ENCODE measurements at regions of chr22 and their contacts with region 1.

Region 1: DNA sequence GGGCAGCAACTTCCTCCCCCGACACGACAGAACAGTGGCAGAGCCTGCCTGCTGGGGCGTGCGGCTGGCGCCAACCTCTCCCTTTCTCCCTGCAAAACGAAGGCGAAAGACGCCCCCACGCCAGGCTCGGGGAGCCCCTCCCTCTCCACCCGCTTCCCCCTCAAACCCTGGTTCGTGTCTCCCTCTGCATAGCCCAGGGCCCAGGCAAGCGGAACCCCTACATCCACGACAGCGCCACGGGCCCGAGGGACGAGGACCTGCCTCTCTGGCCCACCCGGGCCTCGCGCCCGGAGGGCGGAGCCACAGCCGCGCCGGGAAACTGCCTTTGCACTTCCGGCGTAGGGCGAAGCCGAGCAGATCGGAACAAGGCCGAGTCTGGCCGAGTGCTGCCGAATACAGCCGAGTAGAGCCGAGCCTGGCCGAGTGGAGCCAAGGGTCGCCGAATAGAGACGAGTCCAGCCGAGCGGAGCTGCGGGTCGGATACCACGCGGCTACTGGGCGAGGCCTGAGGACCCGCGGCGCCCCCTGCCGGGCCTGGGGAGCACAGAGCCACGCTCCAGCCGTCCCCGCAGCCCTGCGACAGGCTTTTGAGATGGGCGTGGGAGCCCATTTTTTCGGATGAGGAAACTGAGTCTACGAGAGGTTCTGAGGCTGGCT is 11.2 kb upstream of the C1QTNF6 start:
- DNase-seq: peak; percentile 99
- ATAC-seq: peak; percentile 96
- H3K4me3 ChIP-seq: peak overlapping the region; percentile 59 to 89 (median 80)
- H3K4me3 Mint-ChIP-seq: peak overlapping the region; percentile 93
- H3K27ac ChIP-seq: peak overlapping the region; percentile 85 to 90
- H3K27ac Mint-ChIP-seq: peak overlapping the region; percentile 97
- H3K4me1 ChIP-seq: peaks cover 21 to 28% of the 10 kb centered on the region in 2 donors
- H3K4me1 Mint-ChIP-seq: peaks cover 26% of the 10 kb centered on the region
- H3K27me3 ChIP-seq: no peaks in the 10 kb centered on the region
- H3K27me3 Mint-ChIP-seq: no peaks in the 10 kb centered on the region
- CTCF ChIP-seq: peak; percentile 97

Region 2: GRCh38 chr22:37121887-37122591 is 77.2 kb before region 1 on chr22:
- CTCF ChIA-PET with region 1: interaction called, 5 read pairs
- POLR2A ChIA-PET with region 1: no interaction called
- intact Hi-C with region 1: loop called (anchors 1 kb)
- DNase-seq: peak; percentile 88
- ATAC-seq: peak; percentile 92
- H3K4me3 ChIP-seq: peak overlapping the region in 1 of 5 experiments; percentile 33
- H3K4me3 Mint-ChIP-seq: peak overlapping the region; percentile 86
- H3K27ac ChIP-seq: peak overlapping the region; percentile 39 to 69
- H3K27ac Mint-ChIP-seq: peak overlapping the region; percentile 98
- H3K4me1 ChIP-seq: peaks cover 14 to 24% of the 10 kb centered on the region in 2 donors
- H3K4me1 Mint-ChIP-seq: peaks cover 29% of the 10 kb centered on the region
- H3K27me3 ChIP-seq: no peaks in the 10 kb centered on the region
- H3K27me3 Mint-ChIP-seq: no peaks in the 10 kb centered on the region
- CTCF ChIP-seq: peak; percentile 19

Region 3: DNA sequence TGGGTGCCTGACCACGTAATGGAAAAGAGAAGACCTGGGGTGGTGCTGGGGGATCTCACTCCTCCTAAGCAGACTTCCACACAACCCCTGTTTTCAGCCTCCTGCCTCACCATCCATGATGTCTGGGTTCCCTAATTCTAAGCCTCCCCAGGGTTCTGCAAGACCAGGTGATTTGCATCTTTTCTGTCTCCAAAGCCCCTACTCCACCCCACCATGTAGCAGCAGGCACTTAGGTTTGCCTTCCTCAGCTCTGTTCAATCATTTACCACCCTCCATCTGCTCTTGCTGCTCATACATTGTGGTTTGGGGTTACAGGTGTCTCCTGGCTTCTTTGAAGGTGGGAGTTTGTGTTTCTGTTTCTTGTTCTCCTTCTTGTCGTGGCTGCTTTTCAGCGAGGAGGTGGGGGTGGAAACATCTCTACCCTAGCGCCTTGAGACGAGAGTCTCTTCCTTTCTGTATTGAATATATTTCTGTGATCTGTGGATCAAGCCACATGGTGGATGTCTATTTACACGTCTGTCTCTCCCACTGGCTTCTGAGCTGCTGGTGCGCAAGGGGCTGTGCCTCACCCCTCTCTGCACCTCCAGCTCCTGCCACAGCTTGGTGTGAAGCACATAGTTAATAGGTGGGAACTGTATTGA is 19.7 kb after region 1 on chr22:
- CTCF ChIA-PET with region 1: interaction called, 74 read pairs
- POLR2A ChIA-PET with region 1: interaction called, 17 read pairs
- intact Hi-C with region 1: loop called (anchors 1 kb)
- DNase-seq: peak; percentile 93
- ATAC-seq: peak; percentile 88
- H3K4me3 ChIP-seq: peak overlapping the region in 4 of 5 experiments; percentile 11 to 29 (median 22)
- H3K4me3 Mint-ChIP-seq: peak overlapping the region; percentile 69
- H3K27ac ChIP-seq: peak overlapping the region; percentile 87 to 93
- H3K27ac Mint-ChIP-seq: peak overlapping the region; percentile 94
- H3K4me1 ChIP-seq: peaks cover 65 to 74% of the 10 kb centered on the region in 2 donors
- H3K4me1 Mint-ChIP-seq: peaks cover 68% of the 10 kb centered on the region
- H3K27me3 ChIP-seq: no peaks in the 10 kb centered on the region
- H3K27me3 Mint-ChIP-seq: no peaks in the 10 kb centered on the region
- CTCF ChIP-seq: no peak

Region 4: DNA sequence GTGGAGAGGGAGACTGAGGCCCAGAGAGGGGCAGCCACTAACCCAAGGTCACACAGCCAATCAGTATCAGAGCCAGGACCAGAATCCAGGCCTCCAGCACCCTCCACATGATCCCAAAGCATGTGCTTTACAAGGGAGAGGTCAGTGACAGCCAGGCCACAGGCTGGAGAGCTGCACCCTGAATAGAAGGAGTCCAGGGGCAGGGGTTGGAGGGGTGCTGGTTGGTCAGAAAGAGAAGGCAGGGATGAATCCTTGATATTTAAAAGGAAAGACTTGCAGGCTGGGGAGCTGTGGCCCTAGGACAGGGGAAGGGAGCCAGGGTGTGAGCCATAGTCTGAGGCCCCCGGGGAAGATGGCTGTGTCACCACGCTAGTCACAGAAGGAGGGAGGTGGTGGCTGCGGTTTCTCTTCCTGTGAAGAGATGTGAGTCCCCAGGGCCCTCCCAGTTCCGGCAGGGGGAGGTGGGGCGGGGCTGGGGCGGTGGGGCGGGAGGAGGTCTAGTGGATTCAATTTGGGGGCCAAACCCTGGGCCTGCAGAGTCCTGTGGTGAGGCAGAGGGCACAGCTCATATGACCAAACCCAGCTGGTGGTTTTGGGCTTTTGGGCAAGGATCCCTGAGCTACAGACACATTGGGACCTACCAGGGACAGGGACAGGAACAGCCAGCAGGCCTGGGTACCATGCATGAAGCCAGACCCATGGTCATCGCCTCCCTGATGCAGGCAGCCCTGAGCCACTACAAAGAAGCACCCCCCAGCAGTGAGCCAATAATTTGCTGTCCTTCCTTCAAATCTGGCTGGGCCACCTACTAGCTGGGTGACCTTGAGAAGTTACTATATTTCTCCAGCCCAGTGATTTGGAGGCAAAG is 30.8 kb after region 1 on chr22:
- CTCF ChIA-PET with region 1: interaction called, 43 read pairs
- POLR2A ChIA-PET with region 1: interaction called, 16 read pairs
- intact Hi-C with region 1: no loop called
- DNase-seq: peak; percentile 85
- ATAC-seq: peak; percentile 87
- H3K4me3 ChIP-seq: peak overlapping the region; percentile 13 to 30 (median 18)
- H3K4me3 Mint-ChIP-seq: peak overlapping the region; percentile 86
- H3K27ac ChIP-seq: peak overlapping the region; percentile 91 to 96
- H3K27ac Mint-ChIP-seq: peak overlapping the region; percentile 100
- H3K4me1 ChIP-seq: peaks cover 85 to 95% of the 10 kb centered on the region in 2 donors
- H3K4me1 Mint-ChIP-seq: peaks cover 88% of the 10 kb centered on the region
- H3K27me3 ChIP-seq: no peaks in the 10 kb centered on the region
- H3K27me3 Mint-ChIP-seq: no peaks in the 10 kb centered on the region
- CTCF ChIP-seq: no peak

Region 5: DNA sequence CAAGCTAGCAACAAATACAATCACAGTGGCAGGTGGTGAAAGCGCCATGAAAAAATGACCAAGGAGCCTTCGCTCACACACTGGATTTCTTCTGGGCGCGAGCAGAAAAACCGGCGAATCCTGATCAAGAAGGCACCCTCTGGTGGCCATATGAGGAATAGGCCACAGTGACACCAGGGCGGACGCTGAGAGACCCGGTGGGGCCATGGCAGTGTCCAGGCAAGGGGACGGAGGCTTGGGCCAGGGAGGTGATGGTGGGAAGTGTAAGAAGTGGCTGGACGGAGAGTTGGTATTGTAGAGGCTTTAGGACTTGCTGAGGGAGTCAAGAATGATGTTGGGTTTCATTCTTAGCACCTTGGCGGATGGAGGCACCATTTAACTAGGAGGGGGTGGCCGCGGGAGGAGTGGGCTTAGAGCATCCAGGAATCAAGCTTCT is 61.7 kb after region 1 on chr22:
- CTCF ChIA-PET with region 1: interaction called, 119 read pairs
- POLR2A ChIA-PET with region 1: interaction called, 8 read pairs
- intact Hi-C with region 1: loop called (anchors 1 kb)
- DNase-seq: peak; percentile 82
- ATAC-seq: peak; percentile 85
- H3K4me3 ChIP-seq: no peak overlapping the region
- H3K4me3 Mint-ChIP-seq: peak overlapping the region; percentile 27
- H3K27ac ChIP-seq: no peak overlapping the region
- H3K27ac Mint-ChIP-seq: peak overlapping the region; percentile 12
- H3K4me1 ChIP-seq: peaks cover 27 to 36% of the 10 kb centered on the region in 2 donors
- H3K4me1 Mint-ChIP-seq: peaks cover 31% of the 10 kb centered on the region
- H3K27me3 ChIP-seq: no peaks in the 10 kb centered on the region
- H3K27me3 Mint-ChIP-seq: no peaks in the 10 kb centered on the region
- CTCF ChIP-seq: peak; percentile 95